ENCODE measurements at regions of chr2 and their contacts with region 1.

Region 1: GRCh38 chr2:35468245-35468644 is 887.3 kb upstream of the CRIM1 start:
- DNase-seq: no peak
- ATAC-seq: no peak
- H3K4me3 ChIP-seq: no peak overlapping the region
- H3K27ac ChIP-seq: no peak overlapping the region
- H3K4me1 ChIP-seq: no peaks in the 10 kb centered on the region
- H3K27me3 ChIP-seq: no peaks in the 10 kb centered on the region
- CTCF ChIP-seq: no peak

Region 2: DNA sequence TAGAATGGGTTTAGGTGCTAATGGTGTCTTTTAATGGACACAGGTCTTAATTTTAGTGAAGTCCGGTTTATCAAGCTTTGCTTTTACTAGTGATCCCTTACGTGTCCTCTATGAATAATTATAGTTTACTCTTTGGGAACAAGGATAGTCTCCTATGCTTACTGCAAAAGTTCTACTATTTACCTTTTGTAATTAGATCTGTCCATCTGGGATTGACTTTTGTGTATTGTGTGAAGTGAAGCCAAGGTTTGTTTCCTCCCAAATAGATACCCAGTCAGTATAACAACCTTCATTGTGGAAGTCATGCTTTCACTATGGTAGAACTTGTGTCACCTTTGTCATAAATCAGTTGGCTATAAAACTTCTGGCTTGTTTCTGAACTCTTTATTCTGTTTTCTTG is 146.4 kb after region 1 on chr2:
- CTCF ChIA-PET with region 1: no interaction called
- POLR2A ChIA-PET with region 1: no interaction called
- in situ Hi-C with region 1: no loop called
- intact Hi-C with region 1: no loop called
- DNase-seq: no peak
- ATAC-seq: no peak
- H3K4me3 ChIP-seq: no peak overlapping the region
- H3K27ac ChIP-seq: no peak overlapping the region
- H3K4me1 ChIP-seq: no peaks in the 10 kb centered on the region
- H3K27me3 ChIP-seq: no peaks in the 10 kb centered on the region
- CTCF ChIP-seq: no peak

Region 3: DNA sequence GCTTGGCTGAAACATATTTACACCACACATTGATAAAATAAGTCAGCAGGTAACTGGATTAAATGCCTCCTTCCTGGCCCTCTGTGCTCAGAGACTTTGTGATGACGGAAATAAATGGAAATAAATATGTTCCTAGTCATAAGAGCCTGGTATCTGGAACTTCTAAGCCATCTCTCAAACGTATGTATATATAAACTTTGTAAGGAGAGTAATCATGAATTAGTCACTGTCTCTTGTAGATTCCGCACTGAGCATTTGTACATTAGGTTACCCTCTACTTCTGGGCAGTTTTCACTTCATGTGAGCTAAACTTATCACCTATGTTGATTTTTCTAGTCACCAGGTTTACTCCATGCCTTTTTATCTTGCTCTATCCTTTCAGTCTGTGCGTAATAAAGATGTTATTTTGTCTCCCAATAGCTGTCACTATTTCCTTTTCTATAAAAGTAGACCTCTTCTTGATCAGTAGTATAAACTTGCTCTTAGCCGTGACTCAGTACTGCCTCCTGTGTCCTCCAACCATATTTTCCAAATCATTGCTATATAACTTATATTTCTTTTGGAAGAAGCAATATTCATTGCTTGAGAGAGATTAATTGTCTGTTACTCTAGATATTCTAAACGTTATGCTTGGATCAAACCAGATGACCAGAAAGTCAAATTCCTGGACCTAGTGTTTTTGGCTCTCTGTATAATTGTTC is 1076.5 kb after region 1 on chr2:
- CTCF ChIA-PET with region 1: no interaction called
- POLR2A ChIA-PET with region 1: interaction called, 10 read pairs
- in situ Hi-C with region 1: no loop called
- intact Hi-C with region 1: no loop called
- DNase-seq: no peak
- ATAC-seq: peak; percentile 32
- H3K4me3 ChIP-seq: no peak overlapping the region
- H3K27ac ChIP-seq: peak overlapping the region; percentile 74
- H3K4me1 ChIP-seq: peaks cover 65% of the 10 kb centered on the region
- H3K27me3 ChIP-seq: no peaks in the 10 kb centered on the region
- CTCF ChIP-seq: peak; percentile 62; the same call in 1 of the 2 replicates

Measured in Panc1 (cell line).